A673 (cell line): ENCODE measurements at regions of chr13 and their contacts with region 1.

Region 1: DNA sequence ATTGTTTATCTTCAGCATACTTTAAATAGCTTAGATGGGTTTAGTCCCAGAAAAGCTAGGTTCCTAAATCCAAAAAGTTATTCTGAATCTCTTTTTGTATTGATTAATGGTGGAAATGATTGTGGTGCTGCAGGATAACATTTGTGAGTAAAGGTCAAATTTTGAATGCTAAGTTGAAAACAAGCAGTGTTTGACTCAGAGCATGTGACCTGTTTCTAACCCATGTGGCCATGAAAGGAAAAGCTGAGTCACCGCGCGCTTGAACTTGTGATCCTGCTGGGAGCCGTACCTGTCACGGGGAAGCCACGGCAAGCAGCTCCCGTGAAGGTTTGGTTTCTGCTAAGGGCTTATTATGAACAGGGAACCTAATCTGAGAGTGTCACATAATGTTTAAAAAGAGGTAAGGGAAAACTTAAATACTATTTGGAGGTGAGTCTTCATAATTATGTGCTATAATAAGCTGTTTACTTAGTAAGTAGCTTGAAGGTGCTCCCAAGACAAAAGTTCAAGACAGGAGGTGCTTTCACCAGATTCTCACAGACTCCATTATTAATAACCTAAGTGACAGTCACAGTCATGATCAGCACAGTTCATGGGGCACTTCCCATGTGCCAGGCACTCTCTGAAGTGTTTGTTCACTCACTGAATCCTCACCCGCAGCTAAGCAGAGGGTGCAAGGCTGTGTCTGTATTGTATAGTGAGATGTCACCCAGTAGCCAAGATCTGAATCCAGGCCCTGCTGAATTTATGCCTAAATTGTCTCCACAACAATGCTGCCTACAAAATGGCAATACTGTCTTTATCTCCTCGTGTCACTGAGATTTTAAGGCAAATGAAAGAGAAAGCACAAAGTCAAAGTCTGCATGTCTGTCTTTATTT is 286.5 kb downstream of the MYO16 start:
- DNase-seq: peak; percentile 62
- H3K4me3 ChIP-seq: peak overlapping the region; percentile 4
- H3K27ac ChIP-seq: peak overlapping the region; percentile 61
- H3K4me1 ChIP-seq: peaks cover 36% of the 10 kb centered on the region
- H3K27me3 ChIP-seq: no peaks in the 10 kb centered on the region
- CTCF ChIP-seq: no peak

Region 2: DNA sequence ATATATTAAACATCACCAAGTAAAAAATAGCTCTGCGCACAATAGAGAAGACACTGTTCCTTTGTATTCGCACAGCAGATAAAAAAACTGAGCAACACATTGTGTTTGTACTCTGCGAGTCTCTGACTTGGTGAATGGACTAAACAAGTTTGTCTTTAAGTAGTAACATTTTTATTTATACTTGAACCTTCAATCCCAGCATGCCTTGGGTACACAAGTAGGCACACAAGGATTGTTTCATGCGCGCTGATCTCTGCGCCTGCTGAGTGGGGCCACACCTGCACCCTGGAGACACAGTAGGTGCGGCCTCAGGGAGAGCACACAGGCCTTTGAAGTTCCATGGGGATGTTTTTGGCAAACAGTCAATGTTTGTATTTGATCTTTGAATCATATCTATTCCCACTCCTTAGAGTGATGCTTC is 32.4 kb after region 1 on chr13:
- CTCF ChIA-PET with region 1: no interaction called
- POLR2A ChIA-PET with region 1: no interaction called
- intact Hi-C with region 1: no loop called
- DNase-seq: no peak
- H3K4me3 ChIP-seq: no peak overlapping the region
- H3K27ac ChIP-seq: no peak overlapping the region
- H3K4me1 ChIP-seq: no peaks in the 10 kb centered on the region
- H3K27me3 ChIP-seq: no peaks in the 10 kb centered on the region
- CTCF ChIP-seq: no peak

Region 3: DNA sequence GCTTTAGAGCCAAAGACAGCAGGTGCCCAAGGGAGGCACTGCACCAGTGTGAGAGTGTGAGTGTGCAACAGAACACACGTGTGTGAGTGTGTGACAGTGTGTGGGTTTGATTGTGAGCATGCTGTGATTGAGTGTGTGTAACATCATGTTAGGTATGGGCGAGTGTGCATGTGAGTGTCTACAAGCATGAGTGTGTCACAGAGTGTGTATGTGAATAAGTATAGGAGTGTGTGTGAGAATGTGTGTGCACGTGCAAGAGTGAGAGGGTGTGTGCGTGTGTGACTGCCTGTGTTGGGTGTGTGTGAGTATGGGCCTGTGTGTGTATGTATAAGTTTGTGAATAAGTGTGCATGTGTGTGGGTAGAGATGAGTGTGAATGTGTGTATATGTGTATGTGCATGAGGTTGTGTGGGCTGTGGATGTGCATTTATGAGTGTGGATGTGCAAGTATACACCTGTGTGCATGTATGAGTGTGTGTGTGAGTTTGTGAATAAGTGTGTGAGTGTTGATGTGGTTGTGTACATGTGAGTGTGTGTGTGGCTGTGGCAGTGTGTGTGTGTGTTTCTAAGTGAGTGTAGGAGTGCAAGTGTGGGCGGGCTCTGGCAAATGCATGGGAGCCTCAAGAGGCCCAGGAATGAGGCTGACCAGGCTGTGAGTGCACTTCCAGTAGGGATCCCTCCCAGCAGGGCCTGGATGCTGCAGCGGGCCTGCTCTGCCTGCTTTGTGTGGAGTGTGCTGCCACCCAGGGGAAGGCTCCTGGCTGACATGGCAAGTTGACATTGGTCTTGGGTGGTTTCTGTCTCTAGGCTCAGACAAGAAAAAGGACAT is 1192.7 kb after region 1 on chr13:
- CTCF ChIA-PET with region 1: no interaction called
- POLR2A ChIA-PET with region 1: no interaction called
- intact Hi-C with region 1: loop called (anchors 5 kb)
- DNase-seq: peak; percentile 85
- H3K4me3 ChIP-seq: no peak overlapping the region
- H3K27ac ChIP-seq: no peak overlapping the region
- H3K4me1 ChIP-seq: peaks cover 12% of the 10 kb centered on the region
- H3K27me3 ChIP-seq: no peaks in the 10 kb centered on the region
- CTCF ChIP-seq: peak; percentile 76